Activated CD4-positive, alpha-beta T cell treated with anti-CD3 and anti-CD28 coated beads, Interleukin-2, amount 10 ng/mL, durations not matched to agents 24 days and 14 days (primary cell): ENCODE measurements at regions of chr16 and their contacts with region 1.

Region 1: DNA sequence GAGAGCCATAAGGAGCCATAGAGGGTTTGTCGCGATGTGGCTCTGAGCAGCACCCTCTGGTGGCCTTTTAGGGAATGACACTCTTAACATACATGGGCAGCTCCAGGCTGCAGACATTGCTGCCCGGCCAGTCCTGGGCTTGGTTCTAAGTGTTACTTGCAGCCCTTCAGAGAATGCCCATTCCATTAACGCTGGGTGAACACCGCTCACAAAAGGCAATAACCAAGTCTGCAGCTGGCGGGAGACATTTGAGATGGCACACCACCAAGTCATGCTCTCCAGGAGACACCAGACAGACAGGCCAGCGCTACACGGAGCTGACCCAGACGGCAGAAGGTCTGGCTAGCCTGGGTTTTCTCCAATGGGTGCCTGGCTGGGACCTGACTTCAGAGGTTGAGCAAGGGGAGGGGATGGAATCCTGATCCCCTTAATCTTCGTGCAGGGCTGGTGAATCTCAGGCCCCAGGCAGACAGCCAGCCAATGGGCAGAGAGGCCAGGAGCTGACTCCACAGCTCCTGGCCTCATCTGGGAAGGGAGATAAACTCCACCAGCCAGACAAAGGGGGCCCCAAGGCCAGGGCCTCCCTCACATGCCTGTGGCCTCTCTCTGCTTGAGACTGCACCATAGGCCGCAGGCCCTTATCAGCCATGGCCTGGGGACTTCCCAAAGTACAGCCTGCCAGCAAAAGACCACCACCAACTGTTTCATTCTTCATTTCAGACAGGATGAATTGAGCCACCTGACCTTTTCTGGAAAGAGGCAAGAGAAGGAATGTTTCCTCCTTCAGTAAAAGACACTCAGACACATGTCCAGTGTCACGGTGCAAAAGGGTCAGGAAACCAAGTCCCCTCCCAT is 58.8 kb downstream of the ZDHHC7 start:
- DNase-seq: peak; percentile 92
- H3K4me3 Mint-ChIP-seq: no peak overlapping the region
- H3K27ac Mint-ChIP-seq: no peak overlapping the region
- H3K4me1 Mint-ChIP-seq: no peaks in the 10 kb centered on the region
- H3K27me3 Mint-ChIP-seq: peaks cover 3% of the 10 kb centered on the region

Region 2: GRCh38 chr16:84754353-84754856 is 198.2 kb before region 1 on chr16:
- intact Hi-C with region 1: loop called (anchors 1 kb)
- DNase-seq: peak; percentile 94
- H3K4me3 Mint-ChIP-seq: peak overlapping the region; percentile 66
- H3K27ac Mint-ChIP-seq: no peak overlapping the region
- H3K4me1 Mint-ChIP-seq: peaks cover 66% of the 10 kb centered on the region
- H3K27me3 Mint-ChIP-seq: no peaks in the 10 kb centered on the region

Region 3: GRCh38 chr16:84925092-84925772 is 27.3 kb before region 1 on chr16:
- intact Hi-C with region 1: loop called (anchors 1 kb)
- DNase-seq: peak; percentile 89
- H3K4me3 Mint-ChIP-seq: no peak overlapping the region
- H3K27ac Mint-ChIP-seq: no peak overlapping the region
- H3K4me1 Mint-ChIP-seq: no peaks in the 10 kb centered on the region
- H3K27me3 Mint-ChIP-seq: no peaks in the 10 kb centered on the region